B cell (primary cell): ENCODE measurements at regions of chr15 and their contacts with region 1.

Region 1: GRCh38 chr15:81400640-81401236 is 26.7 kb upstream of the TMC3 start:
- DNase-seq: peak; percentile 70
- ATAC-seq: no peak
- H3K4me3 ChIP-seq: no peak overlapping the region
- H3K4me3 Mint-ChIP-seq: no peak overlapping the region
- H3K27ac ChIP-seq: no peak overlapping the region
- H3K27ac Mint-ChIP-seq: no peak overlapping the region
- H3K4me1 ChIP-seq: no peaks in the 10 kb centered on the region
- H3K4me1 Mint-ChIP-seq: no peaks in the 10 kb centered on the region
- H3K27me3 ChIP-seq: no peaks in the 10 kb centered on the region
- H3K27me3 Mint-ChIP-seq: peaks cover 10% of the 10 kb centered on the region
- CTCF ChIP-seq: peak; percentile 84

Region 2: GRCh38 chr15:81106560-81106959 is 294.2 kb before region 1 on chr15:
- CTCF ChIA-PET with region 1: interaction called, 11 read pairs
- POLR2A ChIA-PET with region 1: no interaction called
- intact Hi-C with region 1: loop called (anchors 1 kb)
- DNase-seq: peak; percentile 59
- ATAC-seq: peak; percentile 53
- H3K4me3 ChIP-seq: no peak overlapping the region
- H3K4me3 Mint-ChIP-seq: no peak overlapping the region
- H3K27ac ChIP-seq: no peak overlapping the region
- H3K27ac Mint-ChIP-seq: no peak overlapping the region
- H3K4me1 ChIP-seq: no peaks in the 10 kb centered on the region
- H3K4me1 Mint-ChIP-seq: peaks cover 6% of the 10 kb centered on the region
- H3K27me3 ChIP-seq: peaks cover 0 to 12% (median 4%) of the 10 kb centered on the region in 4 experiments
- H3K27me3 Mint-ChIP-seq: peaks cover 42% of the 10 kb centered on the region
- CTCF ChIP-seq: peak; percentile 79

Region 3: DNA sequence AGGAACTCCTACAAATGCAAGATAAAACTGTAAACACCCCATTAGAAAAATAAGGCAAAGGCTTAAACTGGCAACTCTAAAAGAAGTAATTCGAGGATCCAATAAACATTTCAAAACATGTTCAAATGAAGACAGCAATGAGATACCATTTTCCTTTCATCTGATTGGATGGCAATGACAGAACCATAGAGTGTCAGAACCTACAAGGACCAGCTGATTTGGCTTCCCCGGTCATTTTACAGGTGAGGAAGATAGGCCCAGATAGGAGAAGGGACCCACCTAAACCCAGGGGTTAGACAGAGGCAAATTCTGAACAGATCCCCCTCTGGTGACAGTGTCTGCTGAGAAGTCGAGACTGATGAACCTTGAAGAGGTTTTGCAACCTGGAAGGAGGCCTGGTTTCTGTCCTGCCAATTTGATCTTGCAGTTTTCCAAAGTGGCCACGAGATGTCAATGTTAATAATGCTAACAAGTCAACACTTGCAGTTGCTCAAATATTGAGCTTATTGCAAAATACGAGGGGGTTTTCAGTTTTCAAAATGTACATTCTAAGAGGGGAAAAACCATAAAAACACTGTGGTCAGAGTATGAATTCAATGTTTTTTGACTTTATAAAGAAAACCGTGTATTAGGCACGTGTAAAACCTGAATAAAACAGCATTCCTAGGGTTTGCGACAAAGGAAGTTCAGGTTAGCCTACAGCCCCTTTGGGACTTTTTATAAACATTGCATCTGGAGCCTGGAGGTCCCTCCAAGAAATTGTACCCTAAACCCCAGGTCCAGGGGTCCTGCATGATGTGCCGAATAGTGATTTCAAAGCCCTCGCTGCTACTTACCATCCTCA is 245.1 kb before region 1 on chr15:
- CTCF ChIA-PET with region 1: interaction called, 26 read pairs
- POLR2A ChIA-PET with region 1: no interaction called
- intact Hi-C with region 1: no loop called
- DNase-seq: peak; percentile 43
- ATAC-seq: no peak
- H3K4me3 ChIP-seq: no peak overlapping the region
- H3K4me3 Mint-ChIP-seq: no peak overlapping the region
- H3K27ac ChIP-seq: no peak overlapping the region
- H3K27ac Mint-ChIP-seq: no peak overlapping the region
- H3K4me1 ChIP-seq: no peaks in the 10 kb centered on the region
- H3K4me1 Mint-ChIP-seq: no peaks in the 10 kb centered on the region
- H3K27me3 ChIP-seq: no peaks in the 10 kb centered on the region
- H3K27me3 Mint-ChIP-seq: peaks cover 6% of the 10 kb centered on the region
- CTCF ChIP-seq: peak; percentile 48

Region 4: DNA sequence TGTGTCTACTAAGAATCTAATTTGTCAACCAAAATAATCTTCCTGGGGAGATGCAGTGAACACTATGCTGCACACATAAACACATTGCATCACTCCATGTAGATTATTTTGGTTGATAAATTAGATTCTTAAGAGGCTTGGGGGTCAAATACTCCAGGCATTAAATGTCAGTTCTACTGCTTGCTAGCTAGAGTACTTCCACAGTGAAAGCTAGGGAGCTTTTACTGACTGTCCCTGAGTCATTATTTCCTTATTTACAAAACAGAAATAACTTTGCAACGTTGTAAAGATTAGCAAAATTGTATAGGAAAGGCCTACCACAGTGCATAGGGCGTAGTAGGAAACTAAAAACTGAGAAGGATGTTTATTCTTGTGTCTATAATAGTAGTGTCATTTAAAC is 13.8 kb before region 1 on chr15:
- CTCF ChIA-PET with region 1: interaction called, 14 read pairs
- POLR2A ChIA-PET with region 1: no interaction called
- intact Hi-C with region 1: no loop called
- DNase-seq: no peak
- ATAC-seq: no peak
- H3K4me3 ChIP-seq: no peak overlapping the region
- H3K4me3 Mint-ChIP-seq: no peak overlapping the region
- H3K27ac ChIP-seq: no peak overlapping the region
- H3K27ac Mint-ChIP-seq: no peak overlapping the region
- H3K4me1 ChIP-seq: no peaks in the 10 kb centered on the region
- H3K4me1 Mint-ChIP-seq: no peaks in the 10 kb centered on the region
- H3K27me3 ChIP-seq: no peaks in the 10 kb centered on the region
- H3K27me3 Mint-ChIP-seq: no peaks in the 10 kb centered on the region
- CTCF ChIP-seq: no peak